Mammary epithelial cell (primary cell): ENCODE measurements at regions of chr3 and their contacts with region 1.

Region 1: DNA sequence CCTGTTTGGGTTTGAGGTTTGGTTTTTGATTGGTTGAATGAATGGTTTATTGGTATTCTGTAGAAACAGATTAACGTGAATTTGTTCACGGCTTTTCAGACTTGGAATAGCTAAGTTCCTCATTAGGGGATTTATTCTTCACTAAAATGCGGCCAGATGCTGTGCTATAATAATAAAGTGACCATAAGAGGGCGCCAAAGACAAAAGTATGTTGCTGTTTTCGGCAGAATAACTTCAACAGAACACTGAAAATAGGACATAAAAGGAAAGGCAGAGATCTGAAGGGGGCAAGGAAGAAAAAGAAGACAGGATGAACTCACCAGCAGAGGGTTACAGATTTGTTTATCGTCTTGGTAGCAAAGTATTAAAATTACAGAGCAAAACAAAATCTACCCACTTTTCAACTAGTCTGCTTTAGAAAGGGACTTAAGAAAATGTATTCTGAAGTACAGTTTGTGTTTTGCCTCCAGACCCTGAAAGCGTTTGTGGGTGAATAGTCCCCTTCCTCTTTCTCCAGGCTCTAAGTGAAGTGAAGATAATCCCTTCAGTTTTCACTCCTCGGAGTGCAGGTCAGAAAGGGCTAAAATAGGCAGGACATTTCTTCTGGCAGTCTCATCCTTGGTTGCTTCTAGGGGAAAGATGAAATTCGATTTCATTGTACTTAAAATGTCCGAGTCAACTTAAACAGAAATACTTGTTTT is 147.6 kb downstream of the IL20RB start:
- DNase-seq: peak; percentile 35
- H3K4me3 ChIP-seq: no peak overlapping the region
- H3K27ac ChIP-seq: no peak overlapping the region
- H3K4me1 ChIP-seq: no peaks in the 10 kb centered on the region
- H3K27me3 ChIP-seq: no peaks in the 10 kb centered on the region
- CTCF ChIP-seq: peak; percentile 54 to 59

Region 2: DNA sequence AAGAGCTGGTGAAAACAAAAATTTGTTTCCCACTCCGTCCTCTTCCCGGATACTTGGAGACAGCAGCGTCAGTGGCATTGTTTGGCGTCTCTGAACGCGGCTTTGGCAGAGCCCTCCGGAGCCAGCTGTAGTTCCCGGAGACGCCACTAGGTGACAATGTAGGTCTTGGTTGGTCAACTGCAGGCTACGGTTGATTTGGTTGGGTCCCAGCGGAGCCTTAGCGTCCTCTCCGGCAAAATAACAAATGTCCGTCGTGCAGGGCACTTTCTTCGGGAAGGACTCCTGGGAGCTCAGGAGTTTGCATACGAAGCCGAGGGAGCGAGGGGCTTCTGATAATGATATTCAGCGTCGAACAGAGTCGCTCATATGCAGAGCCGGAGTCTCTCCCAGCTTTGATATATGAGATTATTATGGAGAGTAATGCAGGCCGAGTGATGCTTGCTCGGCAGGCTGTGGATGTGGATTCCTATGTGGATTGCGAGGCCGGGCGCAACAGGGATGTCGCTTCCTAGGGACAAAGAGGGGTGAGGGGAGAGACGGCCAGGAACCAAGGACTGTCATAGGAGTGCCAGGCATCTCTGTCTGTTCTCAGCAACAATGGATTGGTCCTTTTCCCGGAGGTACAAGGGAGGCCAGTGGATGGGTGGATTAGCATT is 72.8 kb before region 1 on chr3:
- CTCF ChIA-PET with region 1: no interaction called
- dilution Hi-C with region 1: no loop called
- in situ Hi-C with region 1: no loop called
- intact Hi-C with region 1: loop called (anchors 5 kb)
- DNase-seq: peak; percentile 65
- H3K4me3 ChIP-seq: peak overlapping the region in 2 of 3 experiments; percentile 17 to 33
- H3K27ac ChIP-seq: no peak overlapping the region
- H3K4me1 ChIP-seq: no peaks in the 10 kb centered on the region
- H3K27me3 ChIP-seq: no peaks in the 10 kb centered on the region
- CTCF ChIP-seq: peak; percentile 96 to 97

Region 3: GRCh38 chr3:137692803-137693431 is 587.5 kb after region 1 on chr3:
- CTCF ChIA-PET with region 1: no interaction called
- dilution Hi-C with region 1: loop called (anchors 5 kb)
- in situ Hi-C with region 1: loop called in 1 of 2 experiments (anchors 25 kb)
- intact Hi-C with region 1: loop called (anchors 2 kb)
- DNase-seq: peak; percentile 16
- H3K4me3 ChIP-seq: no peak overlapping the region
- H3K27ac ChIP-seq: no peak overlapping the region
- H3K4me1 ChIP-seq: no peaks in the 10 kb centered on the region
- H3K27me3 ChIP-seq: no peaks in the 10 kb centered on the region
- CTCF ChIP-seq: peak; percentile 71 to 82

Region 4: DNA sequence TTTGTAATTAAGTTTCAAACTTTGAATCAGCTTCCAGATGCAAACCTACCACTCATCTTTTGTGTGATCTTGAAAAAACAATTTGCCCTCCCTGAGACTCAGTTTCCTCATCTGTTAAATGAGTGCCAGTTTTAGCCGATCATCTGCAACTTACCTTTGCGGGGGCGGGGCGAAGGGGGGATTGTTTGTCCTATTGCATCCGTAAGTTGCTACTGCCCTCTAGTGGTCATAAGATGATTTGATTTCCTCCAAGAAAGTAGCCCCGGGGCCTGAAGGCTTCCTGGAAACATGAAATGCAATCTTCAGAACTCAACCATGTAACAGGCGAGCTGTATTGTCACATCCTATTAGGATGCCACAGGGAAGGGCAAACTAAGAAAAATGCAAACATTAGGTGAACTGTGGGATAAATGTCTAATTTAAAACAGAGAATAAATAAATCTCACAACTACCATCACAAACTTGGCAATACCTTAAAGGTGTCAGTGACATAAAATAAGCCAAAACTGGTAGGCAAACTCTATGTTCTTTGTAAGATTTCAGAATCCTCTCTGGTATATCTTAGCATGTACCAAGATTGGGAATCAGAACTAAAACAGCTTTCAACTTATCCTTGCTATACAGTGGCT is 841.0 kb after region 1 on chr3:
- CTCF ChIA-PET with region 1: interaction called, 6 read pairs
- dilution Hi-C with region 1: no loop called
- in situ Hi-C with region 1: loop called (anchors 25 kb)
- intact Hi-C with region 1: loop called (anchors 1 kb)
- DNase-seq: peak; percentile 58
- H3K4me3 ChIP-seq: no peak overlapping the region
- H3K27ac ChIP-seq: no peak overlapping the region
- H3K4me1 ChIP-seq: no peaks in the 10 kb centered on the region
- H3K27me3 ChIP-seq: no peaks in the 10 kb centered on the region
- CTCF ChIP-seq: peak; percentile 57 to 71

Region 5: GRCh38 chr3:138051946-138052802 is 946.7 kb after region 1 on chr3:
- CTCF ChIA-PET with region 1: no interaction called
- dilution Hi-C with region 1: no loop called
- in situ Hi-C with region 1: no loop called
- intact Hi-C with region 1: loop called (anchors 1 kb)
- DNase-seq: peak; percentile 32
- H3K4me3 ChIP-seq: no peak overlapping the region
- H3K27ac ChIP-seq: no peak overlapping the region
- H3K4me1 ChIP-seq: no peaks in the 10 kb centered on the region
- H3K27me3 ChIP-seq: no peaks in the 10 kb centered on the region
- CTCF ChIP-seq: peak; percentile 80 to 83